Panc1 (cell line): ENCODE measurements at regions of chr2 and their contacts with region 1.

Region 1: DNA sequence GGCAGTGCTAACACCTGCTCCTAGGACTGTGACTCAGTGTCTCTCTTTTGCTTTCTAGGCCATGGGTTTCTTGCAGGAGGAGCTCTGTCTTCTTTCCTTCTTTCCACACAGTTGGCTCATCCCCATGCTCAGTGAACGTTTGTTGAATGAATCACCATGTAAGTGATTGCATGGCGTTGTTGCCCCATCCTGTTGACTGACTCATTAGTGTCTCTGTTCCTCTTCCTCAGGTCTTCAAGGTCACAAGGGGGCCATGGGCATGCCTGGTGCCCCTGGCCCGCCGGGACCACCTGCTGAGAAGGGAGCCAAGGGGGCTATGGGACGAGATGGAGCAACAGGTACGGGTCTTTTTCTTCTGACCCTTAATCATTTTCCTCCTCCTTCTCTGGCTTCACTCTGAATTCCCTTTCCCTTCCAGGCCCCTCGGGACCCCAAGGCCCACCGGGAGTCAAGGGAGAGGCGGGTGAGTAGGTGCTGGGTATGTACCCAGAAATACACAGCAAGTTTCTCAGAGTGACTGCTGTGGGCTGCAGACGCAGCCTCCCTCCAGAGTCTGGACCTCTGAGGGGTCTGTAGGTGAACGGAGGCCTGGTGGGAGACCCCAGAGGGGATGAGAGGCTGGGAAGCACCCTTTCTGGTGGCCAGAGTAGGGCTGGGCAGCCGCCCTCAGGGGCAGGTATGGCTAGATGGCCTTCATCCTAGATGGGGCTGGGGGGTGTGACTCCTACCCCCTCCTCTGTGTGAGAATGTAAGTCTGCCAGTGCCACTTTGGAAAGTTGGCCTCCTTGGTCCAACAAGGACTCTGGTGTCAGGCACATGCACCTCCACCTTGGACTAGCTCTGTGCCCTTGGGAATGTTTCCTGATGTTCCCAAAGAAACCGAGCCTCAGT is 32.4 kb downstream of the MARCO start:
- DNase-seq: no peak
- ATAC-seq: no peak
- H3K4me3 ChIP-seq: no peak overlapping the region
- H3K27ac ChIP-seq: no peak overlapping the region
- H3K4me1 ChIP-seq: no peaks in the 10 kb centered on the region
- H3K27me3 ChIP-seq: peaks cover 3% of the 10 kb centered on the region
- CTCF ChIP-seq: no peak

Region 2: GRCh38 chr2:118855451-118856279 is 118.7 kb before region 1 on chr2:
- CTCF ChIA-PET with region 1: no interaction called
- POLR2A ChIA-PET with region 1: no interaction called
- in situ Hi-C with region 1: no loop called
- intact Hi-C with region 1: no loop called
- DNase-seq: no peak
- ATAC-seq: peak; percentile 90
- H3K4me3 ChIP-seq: peak overlapping the region; percentile 7 to 27; a peak in 3 of 4 replicates
- H3K27ac ChIP-seq: no peak overlapping the region
- H3K4me1 ChIP-seq: 0 out of 2 replicates have a peak, but pooled peaks cover 3% of the 10 kb centered on the region
- H3K27me3 ChIP-seq: peaks cover 13% of the 10 kb centered on the region; the same call in 1 of the 2 replicates
- CTCF ChIP-seq: peak; percentile 97

Region 3: GRCh38 chr2:118940486-118941205 is 33.7 kb before region 1 on chr2:
- CTCF ChIA-PET with region 1: no interaction called
- POLR2A ChIA-PET with region 1: no interaction called
- in situ Hi-C with region 1: no loop called
- intact Hi-C with region 1: loop called (anchors 1 kb)
- DNase-seq: no peak
- ATAC-seq: no peak
- H3K4me3 ChIP-seq: no peak overlapping the region
- H3K27ac ChIP-seq: no peak overlapping the region
- H3K4me1 ChIP-seq: no peaks in the 10 kb centered on the region
- H3K27me3 ChIP-seq: peaks cover 9% of the 10 kb centered on the region; the same call in 1 of the 2 replicates
- CTCF ChIP-seq: no peak

Region 4: DNA sequence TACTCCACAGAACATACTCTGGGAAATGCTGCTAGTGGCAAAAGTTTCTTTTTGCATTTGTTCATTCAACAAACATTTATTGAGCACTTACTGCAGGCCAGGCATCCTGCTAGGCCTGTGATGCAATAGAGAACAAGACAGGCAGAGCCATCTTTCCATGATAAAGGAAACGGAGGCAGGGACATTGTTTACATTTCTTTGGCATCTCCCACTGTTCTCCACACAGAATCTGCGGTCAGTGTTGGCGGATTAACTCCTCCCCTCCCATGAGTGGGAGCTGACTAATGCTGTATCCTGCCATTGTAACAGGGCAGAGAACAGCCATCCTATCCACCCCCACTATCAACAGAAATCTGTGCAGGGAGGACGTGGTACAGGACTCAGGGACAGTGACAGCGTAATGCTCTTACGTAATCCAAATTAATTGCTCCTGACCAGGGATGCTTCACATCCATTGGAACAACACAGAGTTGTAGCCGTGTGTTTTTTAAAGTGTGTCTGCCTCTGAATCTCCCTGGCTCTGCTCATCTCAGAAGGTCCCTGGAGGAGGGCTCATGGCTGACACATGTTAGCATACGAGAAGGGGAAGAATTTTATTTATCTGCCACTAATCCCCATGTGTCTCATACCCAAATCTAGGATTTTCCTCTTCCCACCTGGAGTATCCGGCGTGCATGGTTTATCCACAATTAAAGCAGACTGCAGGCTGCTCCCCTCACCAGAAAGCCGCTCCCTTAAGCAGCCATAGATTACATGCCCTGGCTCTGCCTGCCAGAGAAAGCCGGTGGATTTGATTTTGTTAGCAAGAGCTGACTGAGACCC is 281.6 kb after region 1 on chr2:
- CTCF ChIA-PET with region 1: no interaction called
- POLR2A ChIA-PET with region 1: no interaction called
- in situ Hi-C with region 1: no loop called
- intact Hi-C with region 1: no loop called
- DNase-seq: peak; percentile 81
- ATAC-seq: peak; percentile 85
- H3K4me3 ChIP-seq: no peak overlapping the region
- H3K27ac ChIP-seq: peak overlapping the region; percentile 86
- H3K4me1 ChIP-seq: peaks cover 62% of the 10 kb centered on the region
- H3K27me3 ChIP-seq: no peaks in the 10 kb centered on the region
- CTCF ChIP-seq: no peak